GM12878 (cell line): ENCODE measurements at regions of chr3 and their contacts with region 1.

Region 1: GRCh38 chr3:58414538-58415197 is 19.0 kb downstream of the PDHB start:
- DNase-seq: no peak
- ATAC-seq: peak; percentile 74
- H3K4me3 ChIP-seq: no peak overlapping the region
- H3K27ac ChIP-seq: no peak overlapping the region
- H3K4me1 ChIP-seq: peaks cover 9% of the 10 kb centered on the region
- H3K27me3 ChIP-seq: no peaks in the 10 kb centered on the region
- CTCF ChIP-seq: peak; percentile 63 to 72 (median 71)
- EP300 ChIP-seq: no peak
- POLR2A ChIP-seq: no peak
- RAD21 ChIP-seq: peak; percentile 80

Region 2: DNA sequence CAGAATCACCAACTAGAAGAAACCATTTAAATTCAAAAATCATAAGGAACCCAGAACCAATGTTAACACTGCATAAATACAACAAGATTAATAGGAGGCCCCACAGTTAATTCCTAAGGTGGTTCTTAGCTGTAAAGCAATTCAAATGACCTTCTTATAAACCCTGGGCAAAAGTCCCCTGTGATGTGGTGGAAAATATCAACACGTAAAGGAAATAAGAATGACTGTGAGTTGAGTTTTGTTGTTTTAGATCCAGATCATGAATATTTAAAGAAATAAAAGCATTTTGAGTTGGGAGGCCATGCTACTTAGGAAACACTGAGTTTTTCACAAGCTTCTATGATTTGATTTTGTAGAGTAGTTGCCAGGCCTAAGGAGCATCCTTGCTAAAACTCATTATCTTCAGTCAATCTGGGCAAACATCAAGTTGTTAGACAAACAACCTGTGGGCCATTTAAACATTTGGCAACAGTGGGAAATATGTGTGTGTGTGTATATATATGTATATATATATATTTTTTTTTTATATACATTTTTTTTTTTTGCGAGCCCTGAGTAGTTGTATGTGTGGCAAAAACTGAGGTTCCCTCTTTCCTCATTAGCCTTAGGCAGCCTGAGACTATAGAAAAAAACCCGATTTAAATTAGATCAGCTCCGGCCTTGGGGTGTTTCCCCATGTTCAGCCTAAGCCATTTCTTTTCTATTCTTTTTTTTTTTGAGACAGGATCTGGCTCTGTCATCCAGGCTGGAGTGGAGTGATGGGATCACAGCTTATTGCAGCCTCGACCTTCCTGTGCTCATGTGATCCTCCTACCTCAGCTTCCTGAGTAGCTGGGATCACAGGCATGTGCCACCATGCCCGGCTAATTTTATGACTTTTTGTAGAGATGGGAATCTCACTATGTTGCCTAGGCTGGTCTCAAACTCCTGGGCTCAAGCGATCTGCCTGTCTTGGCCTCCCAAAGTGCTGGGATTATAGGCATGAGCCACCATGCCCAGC is 90.0 kb before region 1 on chr3:
- CTCF ChIA-PET with region 1: interaction called, 112 read pairs
- POLR2A ChIA-PET with region 1: no interaction called
- RAD21 ChIA-PET with region 1: interaction called, 5 read pairs
- SMC1A ChIA-PET with region 1: interaction called, 11 read pairs
- in situ Hi-C with region 1: loop called (anchors 5 kb)
- intact Hi-C with region 1: loop called (anchors 1 kb)
- DNase-seq: no peak
- ATAC-seq: peak; percentile 59
- H3K4me3 ChIP-seq: no peak overlapping the region
- H3K27ac ChIP-seq: no peak overlapping the region; the same call in 1 of the 2 replicates
- H3K4me1 ChIP-seq: peaks cover 17% of the 10 kb centered on the region
- H3K27me3 ChIP-seq: no peaks in the 10 kb centered on the region
- CTCF ChIP-seq: no peak
- EP300 ChIP-seq: no peak
- POLR2A ChIP-seq: no peak
- RAD21 ChIP-seq: no peak

Region 3: GRCh38 chr3:58332575-58333188 is 82.0 kb before region 1 on chr3 and contains the start of gene PXK:
- CTCF ChIA-PET with region 1: interaction called, 44 read pairs
- POLR2A ChIA-PET with region 1: interaction called, 3 read pairs
- RAD21 ChIA-PET with region 1: interaction called, 35 read pairs
- SMC1A ChIA-PET with region 1: interaction called, 81 read pairs
- in situ Hi-C with region 1: loop called (anchors 5 kb)
- intact Hi-C with region 1: loop called (anchors 1 kb)
- DNase-seq: no peak
- ATAC-seq: peak; percentile 92
- H3K4me3 ChIP-seq: peak within 1 kb of the TSS; percentile 93
- H3K27ac ChIP-seq: no peak within 1 kb of the TSS; the same call in 1 of the 2 replicates
- H3K4me1 ChIP-seq: peaks cover 7% of the 10 kb centered on the region; the same call in 1 of the 2 replicates
- H3K27me3 ChIP-seq: no peaks in the 10 kb centered on the region
- CTCF ChIP-seq: peak in 2 of 3 experiments; percentile 14 to 31; a peak in 1 of 6 replicates
- EP300 ChIP-seq: no peak
- POLR2A ChIP-seq: peak; percentile 68
- RAD21 ChIP-seq: peak; percentile 40; the same call in 1 of the 2 replicates
- polyA plus RNA-seq, gene PXK: 8.4 to 10.5 TPM

Region 4: DNA sequence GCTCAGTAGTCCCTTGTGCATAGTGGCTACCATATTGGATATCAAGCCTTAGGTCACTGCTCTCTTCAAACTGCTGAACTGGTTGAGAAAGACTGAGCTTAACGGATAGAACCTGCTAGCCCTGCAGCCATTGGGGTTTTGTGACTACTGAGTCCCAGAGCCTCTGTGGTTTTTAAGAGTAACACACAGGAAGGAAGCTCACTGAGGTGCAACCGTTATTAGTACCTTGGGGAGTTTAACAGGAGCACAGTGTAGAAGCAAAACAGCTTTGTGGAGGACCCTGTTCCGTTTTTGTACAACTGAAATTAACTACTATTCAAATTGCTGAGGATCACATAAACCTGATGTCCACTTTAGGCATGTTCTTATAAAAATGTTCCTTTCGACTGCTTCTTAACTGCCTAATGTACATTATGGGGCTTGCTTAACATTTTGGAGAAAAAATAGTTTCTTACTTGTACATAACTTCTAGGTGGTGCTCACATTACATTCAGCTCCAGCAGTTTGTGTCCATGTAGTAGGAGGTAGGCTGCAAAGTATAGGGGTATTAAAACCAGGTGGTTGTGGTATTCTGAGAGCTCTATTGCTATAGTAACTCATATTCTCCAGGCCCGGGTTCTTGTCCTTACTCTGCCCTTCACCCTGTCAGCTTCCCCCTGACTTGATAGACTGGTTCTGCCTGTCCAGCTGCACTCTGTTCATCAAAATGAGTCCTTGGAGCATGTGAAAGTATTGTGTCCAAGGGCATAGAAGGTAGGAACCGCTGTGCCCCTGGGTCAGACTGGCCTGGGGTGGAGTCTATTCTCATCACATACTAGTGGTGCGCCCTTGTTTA is 64.7 kb before region 1 on chr3:
- CTCF ChIA-PET with region 1: interaction called, 34 read pairs
- POLR2A ChIA-PET with region 1: no interaction called
- RAD21 ChIA-PET with region 1: interaction called, 8 read pairs
- SMC1A ChIA-PET with region 1: interaction called, 27 read pairs
- in situ Hi-C with region 1: no loop called
- intact Hi-C with region 1: no loop called
- DNase-seq: peak; percentile 87
- ATAC-seq: peak; percentile 88
- H3K4me3 ChIP-seq: peak overlapping the region; percentile 9; the same call in 1 of the 2 replicates
- H3K27ac ChIP-seq: peak overlapping the region; percentile 85
- H3K4me1 ChIP-seq: peaks cover 55% of the 10 kb centered on the region
- H3K27me3 ChIP-seq: no peaks in the 10 kb centered on the region
- CTCF ChIP-seq: no peak
- EP300 ChIP-seq: 0 out of 4 replicates have a peak, but pooled peaks of 1 of the 2 experiments have one; percentile 18
- POLR2A ChIP-seq: peak; percentile 60
- RAD21 ChIP-seq: no peak

Region 5: GRCh38 chr3:58392181-58392580 is 22.5 kb before region 1 on chr3:
- CTCF ChIA-PET with region 1: interaction called, 10 read pairs
- POLR2A ChIA-PET with region 1: no interaction called
- RAD21 ChIA-PET with region 1: no interaction called
- SMC1A ChIA-PET with region 1: interaction called, 3 read pairs
- in situ Hi-C with region 1: no loop called
- intact Hi-C with region 1: no loop called
- DNase-seq: no peak
- ATAC-seq: no peak
- H3K4me3 ChIP-seq: no peak overlapping the region
- H3K27ac ChIP-seq: no peak overlapping the region
- H3K4me1 ChIP-seq: no peaks in the 10 kb centered on the region
- H3K27me3 ChIP-seq: no peaks in the 10 kb centered on the region
- CTCF ChIP-seq: no peak
- EP300 ChIP-seq: no peak
- POLR2A ChIP-seq: no peak
- RAD21 ChIP-seq: no peak

Region 6: GRCh38 chr3:58404396-58404795 is 10.3 kb before region 1 on chr3:
- CTCF ChIA-PET with region 1: interaction called, 12 read pairs
- POLR2A ChIA-PET with region 1: interaction called, 3 read pairs
- RAD21 ChIA-PET with region 1: no interaction called
- SMC1A ChIA-PET with region 1: interaction called, 6 read pairs
- in situ Hi-C with region 1: no loop called
- intact Hi-C with region 1: no loop called
- DNase-seq: no peak
- ATAC-seq: no peak
- H3K4me3 ChIP-seq: no peak overlapping the region
- H3K27ac ChIP-seq: no peak overlapping the region
- H3K4me1 ChIP-seq: peaks cover 4% of the 10 kb centered on the region; the same call in 1 of the 2 replicates
- H3K27me3 ChIP-seq: no peaks in the 10 kb centered on the region
- CTCF ChIP-seq: no peak
- EP300 ChIP-seq: no peak
- POLR2A ChIP-seq: no peak
- RAD21 ChIP-seq: no peak

Region 7: DNA sequence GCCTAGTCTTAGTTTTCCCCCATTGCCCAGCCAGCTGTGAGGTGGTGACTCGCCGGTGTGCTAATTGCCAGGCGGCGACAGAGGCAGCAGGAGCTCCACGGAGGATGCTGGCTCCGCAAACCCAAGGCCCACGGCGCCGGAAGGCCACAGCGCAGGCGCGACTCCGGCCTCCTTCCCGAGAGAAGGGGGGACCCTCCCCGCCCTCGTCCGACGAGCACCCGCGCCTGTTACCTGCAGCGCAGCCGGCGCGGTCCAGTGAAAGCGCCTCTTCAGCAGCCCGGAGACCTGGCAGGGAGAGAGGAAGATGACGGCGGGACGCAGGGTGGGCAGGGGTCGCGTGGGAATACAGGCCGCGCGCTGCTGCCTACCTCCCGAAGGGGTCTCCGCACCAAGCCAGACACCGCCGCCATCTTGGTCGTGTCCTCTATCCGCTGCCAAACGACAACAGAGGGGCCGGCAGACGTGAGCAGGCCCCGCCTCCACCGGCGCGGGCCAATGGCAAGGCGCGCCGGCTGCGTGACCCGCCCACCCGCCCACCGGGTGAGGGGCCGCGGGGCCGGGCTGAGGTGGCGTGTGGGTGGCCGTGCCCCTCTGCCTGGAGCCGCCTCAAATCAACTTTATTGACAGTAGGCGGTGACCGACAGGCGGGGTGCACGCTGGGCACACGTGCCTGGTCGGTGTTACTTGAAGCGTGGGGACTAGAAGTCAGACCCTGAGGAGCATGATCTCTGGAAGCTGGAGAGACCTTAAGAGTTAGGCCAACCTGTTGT is 18.9 kb after region 1 on chr3 and contains the start of gene PDHB:
- CTCF ChIA-PET with region 1: interaction called, 18 read pairs
- POLR2A ChIA-PET with region 1: interaction called, 3 read pairs
- RAD21 ChIA-PET with region 1: interaction called, 3 read pairs
- SMC1A ChIA-PET with region 1: interaction called, 18 read pairs
- in situ Hi-C with region 1: no loop called
- intact Hi-C with region 1: no loop called
- DNase-seq: peak; percentile 59
- ATAC-seq: peak; percentile 98
- H3K4me3 ChIP-seq: peak within 1 kb of the TSS; percentile 87
- H3K27ac ChIP-seq: peak within 1 kb of the TSS; percentile 81
- H3K4me1 ChIP-seq: peaks cover 14% of the 10 kb centered on the region
- H3K27me3 ChIP-seq: no peaks in the 10 kb centered on the region
- CTCF ChIP-seq: no peak
- EP300 ChIP-seq: no peak
- POLR2A ChIP-seq: peak; percentile 99
- RAD21 ChIP-seq: no peak
- polyA plus RNA-seq, gene PDHB: 167 to 224 TPM

Region 8: GRCh38 chr3:58520403-58521335 is 106.0 kb after region 1 on chr3:
- CTCF ChIA-PET with region 1: no interaction called
- POLR2A ChIA-PET with region 1: no interaction called
- RAD21 ChIA-PET with region 1: no interaction called
- SMC1A ChIA-PET with region 1: no interaction called
- in situ Hi-C with region 1: no loop called
- intact Hi-C with region 1: no loop called
- DNase-seq: no peak
- ATAC-seq: peak; percentile 85
- H3K4me3 ChIP-seq: no peak overlapping the region
- H3K27ac ChIP-seq: no peak overlapping the region
- H3K4me1 ChIP-seq: no peaks in the 10 kb centered on the region
- H3K27me3 ChIP-seq: no peaks in the 10 kb centered on the region
- CTCF ChIP-seq: no peak
- EP300 ChIP-seq: no peak
- POLR2A ChIP-seq: no peak
- RAD21 ChIP-seq: no peak

Region 9: DNA sequence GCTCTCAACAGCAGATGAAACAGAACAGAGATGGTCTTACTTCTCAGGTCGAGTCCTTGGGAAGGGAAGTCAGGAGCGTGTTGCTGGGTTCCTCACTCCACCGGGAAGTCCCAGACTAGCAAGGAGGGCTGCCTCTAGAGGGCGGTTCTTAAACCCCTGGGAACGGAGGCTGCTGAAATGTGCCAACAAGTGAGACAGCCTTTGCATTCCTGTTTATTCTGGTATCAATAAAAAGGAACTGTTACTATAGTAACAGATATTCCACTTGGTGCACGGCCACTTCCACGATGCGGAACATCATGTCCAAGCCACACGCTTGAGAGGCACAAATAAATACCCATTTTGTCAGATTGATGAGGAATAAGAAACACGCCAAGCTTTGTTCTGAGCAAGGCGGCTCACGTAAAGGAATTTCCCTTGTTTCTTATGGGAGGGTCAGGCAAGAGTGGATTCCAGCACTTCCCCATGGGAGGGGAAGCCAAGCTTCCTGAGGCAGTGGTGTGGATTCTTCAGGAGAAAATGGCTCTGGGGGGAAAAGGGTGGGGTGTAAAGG is 162.7 kb after region 1 on chr3 and contains the start of gene FAM107A:
- CTCF ChIA-PET with region 1: no interaction called
- POLR2A ChIA-PET with region 1: no interaction called
- RAD21 ChIA-PET with region 1: no interaction called
- SMC1A ChIA-PET with region 1: no interaction called
- in situ Hi-C with region 1: no loop called
- intact Hi-C with region 1: no loop called
- DNase-seq: no peak
- ATAC-seq: no peak
- H3K4me3 ChIP-seq: no peak within 1 kb of the TSS
- H3K27ac ChIP-seq: no peak within 1 kb of the TSS
- H3K4me1 ChIP-seq: no peaks in the 10 kb centered on the region
- H3K27me3 ChIP-seq: no peaks in the 10 kb centered on the region
- CTCF ChIP-seq: no peak
- EP300 ChIP-seq: no peak
- POLR2A ChIP-seq: no peak
- RAD21 ChIP-seq: no peak
- polyA plus RNA-seq, gene FAM107A: not detected

Region 10: GRCh38 chr3:58749948-58750347 is 335.3 kb after region 1 on chr3:
- CTCF ChIA-PET with region 1: no interaction called
- POLR2A ChIA-PET with region 1: no interaction called
- RAD21 ChIA-PET with region 1: no interaction called
- SMC1A ChIA-PET with region 1: no interaction called
- in situ Hi-C with region 1: no loop called
- intact Hi-C with region 1: no loop called
- DNase-seq: no peak
- ATAC-seq: no peak
- H3K4me3 ChIP-seq: no peak overlapping the region
- H3K27ac ChIP-seq: no peak overlapping the region
- H3K4me1 ChIP-seq: no peaks in the 10 kb centered on the region
- H3K27me3 ChIP-seq: no peaks in the 10 kb centered on the region
- CTCF ChIP-seq: no peak
- EP300 ChIP-seq: no peak
- POLR2A ChIP-seq: no peak
- RAD21 ChIP-seq: no peak